ENCODE measurements at regions of chr4 and their contacts with region 1.

Region 1: DNA sequence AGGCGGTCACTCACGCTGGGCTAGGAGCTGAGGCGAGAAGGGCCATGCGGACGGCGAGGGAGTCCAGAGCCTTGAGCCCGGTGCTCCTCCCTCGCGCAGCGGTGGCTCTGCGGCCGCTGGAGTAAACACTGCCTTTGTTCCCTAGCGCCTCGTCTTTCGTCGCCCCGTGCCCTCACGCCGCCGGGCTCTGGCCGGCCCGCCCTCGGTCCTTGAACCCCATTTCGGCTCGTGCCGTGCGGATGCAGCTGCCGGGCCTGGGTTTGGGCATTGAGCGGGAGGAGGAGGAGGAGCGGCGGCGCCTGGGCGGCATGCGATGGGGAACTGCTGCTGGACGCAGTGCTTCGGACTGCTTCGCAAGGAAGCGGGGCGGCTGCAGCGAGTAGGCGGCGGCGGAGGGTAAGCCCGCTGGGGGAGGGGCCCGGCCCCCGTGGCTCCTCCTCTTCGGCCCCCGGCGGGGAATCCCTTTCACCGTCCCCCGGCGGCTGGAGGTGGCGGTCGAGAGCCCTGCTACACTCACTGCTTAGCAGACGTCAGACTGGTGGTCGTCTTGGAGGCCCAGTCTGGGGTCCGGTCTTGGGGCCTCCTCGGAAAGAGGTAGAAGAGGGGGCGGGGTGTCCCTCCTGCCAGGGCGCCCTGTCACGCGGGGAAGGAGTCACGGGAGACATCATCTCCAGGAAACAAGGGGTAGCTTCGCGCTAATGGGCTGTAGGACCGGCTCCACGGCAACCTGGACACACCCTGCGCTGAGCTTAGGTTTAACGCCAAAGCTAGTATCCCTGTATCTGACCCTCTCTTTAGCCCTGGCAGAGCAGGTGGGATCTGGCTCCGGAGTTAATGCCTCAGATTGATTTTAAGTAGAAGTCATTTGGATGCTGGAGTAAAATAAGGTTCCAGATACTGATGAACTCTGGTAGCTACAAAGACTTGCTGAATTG is at the start of gene AP1AR:
- DNase-seq: peak; percentile 87 to 88
- ATAC-seq: peak; percentile 73 to 85 (median 77)
- H3K4me3 ChIP-seq: peak within 1 kb of the TSS; percentile 96
- H3K4me3 Mint-ChIP-seq: peak within 1 kb of the TSS; percentile 96
- H3K27ac ChIP-seq: peak within 1 kb of the TSS; percentile 95
- H3K27ac Mint-ChIP-seq: peak within 1 kb of the TSS; percentile 97 to 98
- H3K4me1 ChIP-seq: peaks cover 8% of the 10 kb centered on the region
- H3K4me1 Mint-ChIP-seq: peaks cover 12 to 15% of the 10 kb centered on the region in 2 donors
- H3K27me3 ChIP-seq: no peaks in the 10 kb centered on the region
- H3K27me3 Mint-ChIP-seq: peaks cover under 1 to 2% of the 10 kb centered on the region in 2 donors
- CTCF ChIP-seq: no peak
- total RNA-seq, gene AP1AR: 7.5 to 9.4 (median 7.5) TPM

Region 2: GRCh38 chr4:111905511-111905910 is 326.5 kb before region 1 on chr4:
- intact Hi-C with region 1: no loop called
- DNase-seq: no peak
- ATAC-seq: no peak
- H3K4me3 ChIP-seq: no peak overlapping the region
- H3K4me3 Mint-ChIP-seq: no peak overlapping the region
- H3K27ac ChIP-seq: no peak overlapping the region
- H3K27ac Mint-ChIP-seq: no peak overlapping the region
- H3K4me1 ChIP-seq: no peaks in the 10 kb centered on the region
- H3K4me1 Mint-ChIP-seq: no peaks in the 10 kb centered on the region
- H3K27me3 ChIP-seq: no peaks in the 10 kb centered on the region
- H3K27me3 Mint-ChIP-seq: no peaks in the 10 kb centered on the region
- CTCF ChIP-seq: no peak

Region 3: DNA sequence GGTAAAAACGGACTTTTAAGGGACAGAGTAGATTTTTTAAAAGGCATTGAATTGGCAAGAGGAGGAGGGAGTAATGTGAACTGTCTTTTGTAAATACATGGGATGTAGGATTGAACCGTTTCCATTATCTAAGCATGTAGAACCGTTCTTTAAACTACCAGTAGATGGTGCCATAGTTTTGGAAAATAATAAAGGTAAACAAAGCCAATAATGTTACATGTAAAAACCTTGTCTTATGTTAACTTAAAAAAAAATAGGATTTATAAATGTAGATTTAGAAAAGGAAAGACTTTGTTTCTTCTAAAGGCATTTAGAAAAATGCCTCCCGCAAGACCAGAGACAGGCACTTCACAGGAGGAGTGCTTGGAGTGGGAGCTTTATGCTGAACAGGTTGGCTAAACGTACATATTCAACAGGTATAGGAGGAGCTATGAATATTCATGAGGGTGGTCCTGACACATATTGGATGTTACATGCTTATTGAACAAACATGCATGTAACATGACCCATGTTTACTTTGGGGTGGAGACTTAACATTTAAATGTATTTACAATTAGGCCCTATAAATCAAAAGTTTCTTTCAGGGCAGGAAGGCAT is 132.2 kb before region 1 on chr4:
- intact Hi-C with region 1: loop called (anchors 1 kb)
- DNase-seq: peak in 1 of 2 donors; percentile 69
- ATAC-seq: peak in 2 of 3 donors; percentile 50 to 64
- H3K4me3 ChIP-seq: no peak overlapping the region
- H3K4me3 Mint-ChIP-seq: no peak overlapping the region
- H3K27ac ChIP-seq: no peak overlapping the region
- H3K27ac Mint-ChIP-seq: no peak overlapping the region
- H3K4me1 ChIP-seq: no peaks in the 10 kb centered on the region
- H3K4me1 Mint-ChIP-seq: peaks cover 0 to 7% of the 10 kb centered on the region in 2 donors
- H3K27me3 ChIP-seq: no peaks in the 10 kb centered on the region
- H3K27me3 Mint-ChIP-seq: peaks cover 16 to 22% of the 10 kb centered on the region in 2 donors
- CTCF ChIP-seq: peak; percentile 75

Region 4: GRCh38 chr4:112145326-112145819 is 86.7 kb before region 1 on chr4 and contains the start of gene FAM241A:
- intact Hi-C with region 1: loop called (anchors 1 kb)
- DNase-seq: peak; percentile 85 to 91
- ATAC-seq: peak; percentile 91 to 98 (median 94)
- H3K4me3 ChIP-seq: peak within 1 kb of the TSS; percentile 93
- H3K4me3 Mint-ChIP-seq: peak within 1 kb of the TSS; percentile 81
- H3K27ac ChIP-seq: peak within 1 kb of the TSS; percentile 84
- H3K27ac Mint-ChIP-seq: peak within 1 kb of the TSS; percentile 43 to 54
- H3K4me1 ChIP-seq: peaks cover 7% of the 10 kb centered on the region
- H3K4me1 Mint-ChIP-seq: peaks cover 6 to 10% of the 10 kb centered on the region in 2 donors
- H3K27me3 ChIP-seq: peaks cover 3% of the 10 kb centered on the region
- H3K27me3 Mint-ChIP-seq: peaks cover 6 to 8% of the 10 kb centered on the region in 2 donors
- CTCF ChIP-seq: no peak
- total RNA-seq, gene FAM241A: 0.36 to 0.75 (median 0.40) TPM

Region 5: GRCh38 chr4:112284662-112285411 is 52.8 kb after region 1 on chr4:
- intact Hi-C with region 1: loop called (anchors 1 kb)
- DNase-seq: peak in 1 of 2 donors; percentile 74
- ATAC-seq: peak in 2 of 3 donors; percentile 4 to 11
- H3K4me3 ChIP-seq: peak overlapping the region; percentile 83
- H3K4me3 Mint-ChIP-seq: peak overlapping the region; percentile 95
- H3K27ac ChIP-seq: peak overlapping the region; percentile 67
- H3K27ac Mint-ChIP-seq: peak overlapping the region; percentile 88 to 89
- H3K4me1 ChIP-seq: peaks cover 37% of the 10 kb centered on the region
- H3K4me1 Mint-ChIP-seq: peaks cover 69 to 73% of the 10 kb centered on the region in 2 donors
- H3K27me3 ChIP-seq: no peaks in the 10 kb centered on the region
- H3K27me3 Mint-ChIP-seq: no peaks in the 10 kb centered on the region
- CTCF ChIP-seq: no peak

Region 6: GRCh38 chr4:112472318-112472717 is 240.3 kb after region 1 on chr4:
- intact Hi-C with region 1: no loop called
- DNase-seq: no peak
- ATAC-seq: no peak
- H3K4me3 ChIP-seq: no peak overlapping the region
- H3K4me3 Mint-ChIP-seq: no peak overlapping the region
- H3K27ac ChIP-seq: no peak overlapping the region
- H3K27ac Mint-ChIP-seq: no peak overlapping the region
- H3K4me1 ChIP-seq: no peaks in the 10 kb centered on the region
- H3K4me1 Mint-ChIP-seq: no peaks in the 10 kb centered on the region
- H3K27me3 ChIP-seq: no peaks in the 10 kb centered on the region
- H3K27me3 Mint-ChIP-seq: peaks cover 0 to 2% of the 10 kb centered on the region in 2 donors
- CTCF ChIP-seq: no peak

Region 7: GRCh38 chr4:112523764-112524505 is 291.9 kb after region 1 on chr4:
- intact Hi-C with region 1: loop called (anchors 10 kb)
- DNase-seq: peak; percentile 58 to 81
- ATAC-seq: peak; percentile 85 to 91 (median 87)
- H3K4me3 ChIP-seq: peak overlapping the region; percentile 9
- H3K4me3 Mint-ChIP-seq: peak overlapping the region; percentile 93
- H3K27ac ChIP-seq: no peak overlapping the region
- H3K27ac Mint-ChIP-seq: no peak overlapping the region
- H3K4me1 ChIP-seq: peaks cover 33% of the 10 kb centered on the region
- H3K4me1 Mint-ChIP-seq: peaks cover 14 to 26% of the 10 kb centered on the region in 2 donors
- H3K27me3 ChIP-seq: peaks cover 44% of the 10 kb centered on the region
- H3K27me3 Mint-ChIP-seq: peaks cover 48 to 72% of the 10 kb centered on the region in 2 donors
- CTCF ChIP-seq: peak; percentile 75

Region 8: DNA sequence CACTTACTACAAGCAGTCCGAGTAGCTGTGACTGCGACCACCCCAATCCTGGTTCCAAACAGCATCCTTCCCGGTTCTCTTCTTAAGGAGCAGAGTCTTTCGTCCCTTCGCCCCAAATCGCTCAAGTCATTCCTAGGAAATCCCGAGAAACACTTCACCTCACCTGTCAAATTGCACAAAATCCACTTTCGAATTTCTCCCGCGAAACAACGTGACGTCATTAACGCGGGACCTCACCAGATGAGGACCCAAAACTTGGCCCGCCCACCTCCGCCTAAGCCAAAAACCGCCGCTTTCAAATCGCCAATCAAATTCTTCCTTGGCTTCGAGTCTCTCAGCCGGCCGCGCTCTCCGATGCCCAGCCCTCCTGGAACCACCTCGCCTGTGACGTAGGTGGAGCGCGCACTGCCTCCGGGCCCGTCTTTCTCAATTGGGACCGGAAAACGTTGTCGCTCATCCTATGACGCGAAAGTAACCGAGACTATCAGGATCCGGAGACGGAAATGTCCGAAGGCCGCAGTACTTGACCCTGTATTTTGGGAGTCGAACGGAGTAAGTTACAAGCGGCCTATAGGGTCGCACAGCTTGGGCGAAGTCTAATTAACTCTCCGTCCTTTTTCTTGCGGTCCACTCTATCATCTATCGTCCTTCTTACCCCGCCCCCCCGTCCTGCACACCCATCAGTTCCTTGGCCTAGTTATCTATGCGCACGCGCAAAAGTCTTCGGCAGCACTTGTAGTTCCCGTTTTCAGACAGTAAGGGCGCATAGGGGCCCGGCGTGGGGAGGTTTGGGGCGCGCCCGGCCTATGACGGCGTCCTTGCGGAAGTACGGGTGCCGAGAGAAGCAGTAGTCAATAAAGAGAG is 404.9 kb after region 1 on chr4 and contains the starts of genes LARP7 and ZGRF1:
- intact Hi-C with region 1: loop called (anchors 1 kb)
- DNase-seq: peak; percentile 95 to 99
- ATAC-seq: peak; percentile 87 to 94 (median 87)
- H3K4me3 ChIP-seq: peak within 1 kb of the TSS; percentile 66
- H3K4me3 Mint-ChIP-seq: no peak within 1 kb of the TSS
- H3K27ac ChIP-seq: peak within 1 kb of the TSS; percentile 93
- H3K27ac Mint-ChIP-seq: no peak within 1 kb of the TSS
- H3K4me1 ChIP-seq: peaks cover 6% of the 10 kb centered on the region
- H3K4me1 Mint-ChIP-seq: peaks cover 14 to 15% of the 10 kb centered on the region in 2 donors
- H3K27me3 ChIP-seq: no peaks in the 10 kb centered on the region
- H3K27me3 Mint-ChIP-seq: no peaks in the 10 kb centered on the region
- CTCF ChIP-seq: peak; percentile 72
- total RNA-seq, gene LARP7: 45.7 to 55.4 (median 48.4) TPM
- total RNA-seq, gene ZGRF1: 13.0 to 25.9 (median 20.0) TPM